ENCODE measurements at regions of chr16 and their contacts with region 1.

Region 1: DNA sequence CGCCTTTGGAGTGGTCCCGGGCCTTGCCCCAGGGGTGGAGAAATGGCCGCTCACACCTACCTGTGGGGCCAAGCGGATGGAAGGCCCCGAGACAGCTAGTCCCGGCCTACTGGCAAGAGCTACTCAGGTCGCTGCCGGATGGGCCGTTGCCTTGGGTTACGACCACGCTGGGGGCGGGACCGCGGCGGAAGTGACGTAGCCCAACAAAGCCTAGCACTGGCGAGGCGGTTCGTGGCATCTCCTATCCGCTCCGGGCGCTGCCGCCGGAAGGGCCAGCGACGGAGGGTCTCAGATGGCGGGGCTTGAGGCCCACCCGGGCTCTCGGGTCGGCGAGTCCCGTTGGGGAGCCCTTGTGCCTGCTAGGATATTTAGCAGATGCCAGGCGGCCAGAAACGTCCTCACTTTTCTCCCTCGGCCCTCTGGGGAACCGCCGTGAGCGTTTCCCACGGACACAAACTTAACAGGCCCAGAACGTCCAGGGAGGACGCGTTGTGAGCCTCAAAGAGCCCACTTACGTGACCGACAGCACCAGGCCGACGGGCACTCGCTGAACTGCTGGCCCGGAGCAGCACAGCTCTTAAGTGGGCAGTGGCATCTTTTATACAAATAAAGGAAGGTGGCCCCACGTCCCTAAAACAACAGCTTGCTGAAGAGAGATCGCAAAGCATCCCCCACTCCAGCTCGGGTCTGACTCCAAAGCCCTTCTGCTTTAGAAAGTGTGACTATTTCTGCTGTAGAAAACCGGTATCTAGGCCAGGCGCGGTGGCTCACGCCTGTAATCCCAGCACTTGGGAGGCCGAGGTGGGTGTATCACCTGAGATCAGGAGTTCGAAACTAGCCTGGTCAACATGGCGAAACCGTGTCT is at the start of gene C16orf46:
- DNase-seq: peak; percentile 99
- ATAC-seq: peak; percentile 77
- H3K4me3 Mint-ChIP-seq: peak within 1 kb of the TSS; percentile 28
- H3K27ac Mint-ChIP-seq: no peak within 1 kb of the TSS
- H3K4me1 Mint-ChIP-seq: peaks cover 3% of the 10 kb centered on the region
- H3K27me3 Mint-ChIP-seq: no peaks in the 10 kb centered on the region
- CTCF ChIP-seq: no peak
- total RNA-seq, gene C16orf46: 0.61 and 0.75 TPM in 2 replicates

Region 2: GRCh38 chr16:80804056-80804450 is 273.3 kb before region 1 on chr16:
- CTCF ChIA-PET with region 1: no interaction called
- POLR2A ChIA-PET with region 1: no interaction called
- intact Hi-C with region 1: loop called (anchors 10 kb)
- DNase-seq: peak; percentile 42
- ATAC-seq: peak; percentile 54
- H3K4me3 Mint-ChIP-seq: peak overlapping the region; percentile 92
- H3K27ac Mint-ChIP-seq: no peak overlapping the region
- H3K4me1 Mint-ChIP-seq: peaks cover 4% of the 10 kb centered on the region
- H3K27me3 Mint-ChIP-seq: peaks cover 5% of the 10 kb centered on the region
- CTCF ChIP-seq: no peak

Region 3: GRCh38 chr16:81035398-81035974 is 41.8 kb before region 1 on chr16 and contains the start of gene ATMIN:
- CTCF ChIA-PET with region 1: interaction called, 21 read pairs
- POLR2A ChIA-PET with region 1: interaction called, 19 read pairs
- intact Hi-C with region 1: loop called (anchors 1 kb)
- DNase-seq: peak; percentile 92
- ATAC-seq: peak; percentile 97
- H3K4me3 Mint-ChIP-seq: peak within 1 kb of the TSS; percentile 79
- H3K27ac Mint-ChIP-seq: peak within 1 kb of the TSS; percentile 30
- H3K4me1 Mint-ChIP-seq: peaks cover 22% of the 10 kb centered on the region
- H3K27me3 Mint-ChIP-seq: no peaks in the 10 kb centered on the region
- CTCF ChIP-seq: peak; percentile 90
- total RNA-seq, gene ATMIN: 30.6 and 31.0 TPM in 2 replicates

Region 4: GRCh38 chr16:81095953-81096717 is 18.8 kb after region 1 on chr16 and contains the start of gene GCSH:
- CTCF ChIA-PET with region 1: interaction called, 3 read pairs
- POLR2A ChIA-PET with region 1: interaction called, 5 read pairs
- intact Hi-C with region 1: loop called (anchors 1 kb)
- DNase-seq: peak; percentile 97
- ATAC-seq: peak; percentile 97
- H3K4me3 Mint-ChIP-seq: peak within 1 kb of the TSS; percentile 83
- H3K27ac Mint-ChIP-seq: peak within 1 kb of the TSS; percentile 50
- H3K4me1 Mint-ChIP-seq: peaks cover 18% of the 10 kb centered on the region
- H3K27me3 Mint-ChIP-seq: no peaks in the 10 kb centered on the region
- CTCF ChIP-seq: no peak
- total RNA-seq, gene GCSH: 8.4 and 8.8 TPM in 2 replicates

Region 5: GRCh38 chr16:81204798-81205680 is 127.7 kb after region 1 on chr16:
- CTCF ChIA-PET with region 1: no interaction called
- POLR2A ChIA-PET with region 1: no interaction called
- intact Hi-C with region 1: no loop called
- DNase-seq: no peak
- ATAC-seq: no peak
- H3K4me3 Mint-ChIP-seq: no peak overlapping the region
- H3K27ac Mint-ChIP-seq: no peak overlapping the region
- H3K4me1 Mint-ChIP-seq: no peaks in the 10 kb centered on the region
- H3K27me3 Mint-ChIP-seq: peaks cover 17% of the 10 kb centered on the region
- CTCF ChIP-seq: no peak

Region 6: GRCh38 chr16:81314603-81315270 is 237.4 kb after region 1 on chr16 and contains the start of gene GAN:
- CTCF ChIA-PET with region 1: no interaction called
- POLR2A ChIA-PET with region 1: interaction called, 4 read pairs
- intact Hi-C with region 1: loop called (anchors 1 kb)
- DNase-seq: peak; percentile 89
- ATAC-seq: peak; percentile 95
- H3K4me3 Mint-ChIP-seq: peak within 1 kb of the TSS; percentile 96
- H3K27ac Mint-ChIP-seq: peak within 1 kb of the TSS; percentile 91
- H3K4me1 Mint-ChIP-seq: peaks cover 29% of the 10 kb centered on the region
- H3K27me3 Mint-ChIP-seq: no peaks in the 10 kb centered on the region
- CTCF ChIP-seq: no peak
- total RNA-seq, gene GAN: 5.1 and 8.6 TPM in 2 replicates

Region 7: DNA sequence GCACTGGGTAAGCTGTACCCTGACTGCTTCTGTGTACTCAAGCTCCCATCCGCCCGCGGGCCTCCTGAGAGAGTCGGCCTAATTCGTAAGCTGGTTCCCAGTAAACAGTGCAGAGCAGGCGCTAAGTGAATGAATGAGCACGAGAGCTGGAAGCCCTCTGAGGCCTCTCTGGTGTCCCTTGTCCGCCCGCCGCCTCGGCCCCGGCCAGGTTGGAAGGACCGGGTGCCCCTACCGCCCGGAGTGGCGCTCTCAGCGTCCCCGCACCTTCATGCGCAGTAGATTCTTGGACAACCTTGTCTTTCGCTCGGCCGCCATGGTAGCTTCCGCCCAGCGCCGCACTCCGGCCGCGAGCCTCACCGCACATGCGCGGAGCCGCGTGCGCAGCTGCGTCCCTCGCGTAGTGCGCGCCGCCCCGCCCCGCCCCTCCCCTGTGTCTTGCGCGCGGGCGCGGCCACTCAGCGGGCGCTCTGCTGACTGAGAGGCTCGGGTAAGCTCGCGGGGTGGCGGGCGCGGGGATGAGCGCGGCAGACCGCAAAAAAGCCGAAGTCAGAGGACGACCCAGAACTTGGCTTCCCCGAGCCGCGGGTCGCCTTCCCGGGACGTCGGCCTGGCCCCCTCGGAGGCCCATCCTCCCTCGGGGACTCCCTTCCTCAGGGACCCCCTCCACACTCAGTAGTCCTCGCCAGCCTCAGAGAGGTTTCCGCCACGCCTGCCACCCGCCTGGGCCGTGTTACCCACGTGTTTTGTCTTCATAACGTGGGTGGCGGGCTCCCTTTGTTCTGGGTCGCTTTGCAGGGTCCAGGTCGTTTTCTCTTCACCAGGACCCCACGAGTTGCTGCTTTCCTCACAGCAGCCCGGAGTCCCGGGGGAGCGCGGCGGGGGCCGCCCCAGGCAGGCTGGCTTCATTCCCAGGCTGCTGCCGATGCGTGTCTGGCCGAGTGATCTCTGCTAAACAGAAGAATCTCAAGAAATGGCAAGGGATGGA is 1092.8 kb after region 1 on chr16 and contains the start of gene MPHOSPH6:
- CTCF ChIA-PET with region 1: no interaction called
- POLR2A ChIA-PET with region 1: no interaction called
- intact Hi-C with region 1: loop called (anchors 1 kb)
- DNase-seq: peak; percentile 88
- ATAC-seq: peak; percentile 95
- H3K4me3 Mint-ChIP-seq: peak within 1 kb of the TSS; percentile 96
- H3K27ac Mint-ChIP-seq: peak within 1 kb of the TSS; percentile 91
- H3K4me1 Mint-ChIP-seq: peaks cover 19% of the 10 kb centered on the region
- H3K27me3 Mint-ChIP-seq: peaks cover 14% of the 10 kb centered on the region
- CTCF ChIP-seq: no peak
- total RNA-seq, gene MPHOSPH6: 22.2 and 31.6 TPM in 2 replicates

Measured in activated B cell treated with CpG ODN at 0.5 μM for 24 hours (primary cell).